ENCODE measurements at regions of chr4 and their contacts with region 1.

Region 1: DNA sequence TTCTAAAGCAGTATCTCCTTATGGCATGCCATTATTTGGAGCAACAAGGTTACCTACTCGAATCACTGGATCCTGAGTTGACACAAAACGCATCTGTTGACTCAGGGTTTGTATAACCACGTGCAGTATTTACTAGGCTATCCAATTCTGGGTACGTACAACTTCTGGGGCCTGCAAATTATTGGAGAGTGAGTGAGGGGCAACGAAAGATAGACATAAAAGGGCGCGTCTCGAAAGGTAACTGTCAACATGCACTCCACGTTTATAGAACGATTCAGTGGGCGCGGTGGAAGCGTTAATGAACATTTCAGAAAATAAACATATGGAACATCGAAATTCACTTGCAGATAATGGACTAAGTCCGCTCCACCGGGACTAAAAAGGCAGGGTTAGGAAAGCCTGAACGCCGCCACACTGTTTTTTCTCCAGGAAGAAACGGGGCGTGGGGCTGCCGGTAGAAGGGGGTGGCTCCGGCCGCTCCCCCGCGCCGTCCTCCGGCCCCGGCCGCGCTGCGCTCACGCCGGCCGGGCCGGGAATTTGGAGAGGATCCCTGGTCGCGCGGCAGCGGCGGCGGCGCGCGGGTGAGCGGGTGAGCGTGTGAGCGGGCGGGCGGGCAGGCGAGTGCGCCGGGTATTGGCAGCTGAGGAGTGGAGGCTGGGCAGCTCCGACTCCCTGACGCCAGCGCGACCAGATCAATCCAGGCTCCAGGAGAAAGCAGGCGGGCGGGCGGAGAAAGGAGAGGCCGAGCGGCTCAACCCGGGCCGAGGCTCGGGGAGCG is at the start of gene SMAD1:
- DNase-seq: peak; percentile 84 to 87
- ATAC-seq: peak; percentile 80 to 85
- H3K4me3 ChIP-seq: peak within 1 kb of the TSS; percentile 68 to 94 (median 77)
- H3K27ac ChIP-seq: peak within 1 kb of the TSS; percentile 91 to 98 (median 94)
- H3K4me1 ChIP-seq: peaks cover 28 to 30% of the 10 kb centered on the region in 2 donors
- H3K27me3 ChIP-seq: no peaks in the 10 kb centered on the region
- CTCF ChIP-seq: peak in 1 of 5 experiments; percentile 5
- POLR2A ChIP-seq: peak; percentile 77 to 84
- total RNA-seq, gene SMAD1: 19.9 to 33.9 (median 21.7) TPM

Region 2: DNA sequence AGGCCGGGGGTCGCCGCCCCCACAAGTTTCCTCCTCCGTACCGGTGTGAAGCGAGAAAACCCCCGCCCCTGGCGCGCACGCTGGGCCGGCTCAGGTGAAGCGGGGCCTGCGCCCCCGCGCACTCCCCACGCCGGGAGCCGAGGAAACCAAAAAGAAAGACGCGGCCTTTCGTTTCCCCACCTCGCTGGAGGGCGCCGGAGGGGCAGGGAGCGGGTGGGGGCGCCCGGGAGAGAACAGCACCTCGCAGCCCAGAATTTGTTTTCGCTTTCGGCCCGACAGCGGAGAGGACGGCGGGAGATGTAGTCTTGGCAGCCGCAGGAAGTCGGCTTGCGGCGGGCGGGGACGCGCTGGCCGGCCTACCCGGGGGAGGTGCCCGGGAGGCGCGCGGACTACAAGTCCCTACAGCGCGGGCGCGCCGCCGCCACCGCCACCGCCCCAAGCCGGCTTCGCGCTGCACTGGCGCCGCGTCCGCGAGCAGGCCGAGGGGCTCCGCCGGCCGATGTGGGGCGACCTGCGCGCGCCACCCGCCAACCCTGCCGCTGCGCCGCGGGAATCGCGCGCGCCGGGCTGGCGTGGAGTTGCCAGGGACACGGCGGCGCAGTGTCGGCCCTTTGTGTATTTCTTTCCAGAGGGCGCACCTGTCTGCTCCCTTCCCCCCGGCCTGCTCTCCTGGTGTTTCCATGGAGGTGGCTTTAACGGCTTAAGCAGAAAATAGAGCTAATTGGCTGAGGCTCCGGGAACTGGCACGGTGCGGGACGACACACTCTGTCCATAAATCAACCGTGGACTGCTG is 300.9 kb before region 1 on chr4 and contains the start of gene OTUD4:
- in situ Hi-C with region 1: no loop called
- intact Hi-C with region 1: loop called (anchors 1 kb)
- DNase-seq: peak; percentile 94 to 96
- ATAC-seq: peak; percentile 71 to 76
- H3K4me3 ChIP-seq: peak within 1 kb of the TSS; percentile 63 to 95 (median 87)
- H3K27ac ChIP-seq: peak within 1 kb of the TSS; percentile 97 to 99 (median 98)
- H3K4me1 ChIP-seq: peaks cover 26 to 43% of the 10 kb centered on the region in 2 donors
- H3K27me3 ChIP-seq: no peaks in the 10 kb centered on the region
- CTCF ChIP-seq: peak in 3 of 5 experiments; percentile 15 to 23 (median 18)
- POLR2A ChIP-seq: peak; percentile 86 to 87
- total RNA-seq, gene OTUD4: 32.6 to 61.1 (median 47.9) TPM

Region 3: GRCh38 chr4:145446184-145446583 is 35.2 kb before region 1 on chr4:
- in situ Hi-C with region 1: no loop called
- intact Hi-C with region 1: no loop called
- DNase-seq: no peak
- ATAC-seq: no peak
- H3K4me3 ChIP-seq: no peak overlapping the region
- H3K27ac ChIP-seq: no peak overlapping the region
- H3K4me1 ChIP-seq: no peaks in the 10 kb centered on the region
- H3K27me3 ChIP-seq: no peaks in the 10 kb centered on the region
- CTCF ChIP-seq: no peak
- POLR2A ChIP-seq: no peak

Region 4: DNA sequence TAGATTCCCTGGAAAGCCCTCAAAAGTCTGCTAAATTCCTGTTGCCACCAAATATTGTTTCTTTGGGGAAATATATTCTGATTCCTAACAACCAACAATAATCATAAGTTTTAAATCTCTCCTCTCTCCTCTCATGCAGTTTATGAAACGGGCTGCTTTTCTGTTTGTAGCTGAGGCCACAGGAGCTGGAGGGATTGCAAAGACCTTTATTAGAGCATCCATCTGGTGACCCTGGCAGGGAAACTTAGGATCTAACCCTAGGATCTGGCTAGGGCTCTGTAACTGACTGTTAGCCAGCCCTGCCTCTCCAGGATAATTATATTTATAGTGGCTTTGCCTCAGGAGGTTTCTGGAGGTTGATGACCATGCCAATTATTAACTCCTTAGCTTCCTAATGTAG is 57.2 kb after region 1 on chr4:
- in situ Hi-C with region 1: no loop called
- intact Hi-C with region 1: loop called (anchors 5 kb)
- DNase-seq: no peak
- ATAC-seq: no peak
- H3K4me3 ChIP-seq: no peak overlapping the region
- H3K27ac ChIP-seq: no peak overlapping the region
- H3K4me1 ChIP-seq: peaks cover 23 to 45% of the 10 kb centered on the region in 2 donors
- H3K27me3 ChIP-seq: no peaks in the 10 kb centered on the region
- CTCF ChIP-seq: no peak
- POLR2A ChIP-seq: no peak

Region 5: GRCh38 chr4:145557720-145558119 is 76.4 kb after region 1 on chr4:
- in situ Hi-C with region 1: no loop called
- intact Hi-C with region 1: loop called (anchors 2 kb)
- DNase-seq: peak in 1 of 2 donors; percentile 52
- ATAC-seq: peak; percentile 42 to 81
- H3K4me3 ChIP-seq: no peak overlapping the region
- H3K27ac ChIP-seq: no peak overlapping the region
- H3K4me1 ChIP-seq: no peaks in the 10 kb centered on the region
- H3K27me3 ChIP-seq: no peaks in the 10 kb centered on the region
- CTCF ChIP-seq: peak; percentile 76 to 88 (median 77)
- POLR2A ChIP-seq: no peak

Region 6: DNA sequence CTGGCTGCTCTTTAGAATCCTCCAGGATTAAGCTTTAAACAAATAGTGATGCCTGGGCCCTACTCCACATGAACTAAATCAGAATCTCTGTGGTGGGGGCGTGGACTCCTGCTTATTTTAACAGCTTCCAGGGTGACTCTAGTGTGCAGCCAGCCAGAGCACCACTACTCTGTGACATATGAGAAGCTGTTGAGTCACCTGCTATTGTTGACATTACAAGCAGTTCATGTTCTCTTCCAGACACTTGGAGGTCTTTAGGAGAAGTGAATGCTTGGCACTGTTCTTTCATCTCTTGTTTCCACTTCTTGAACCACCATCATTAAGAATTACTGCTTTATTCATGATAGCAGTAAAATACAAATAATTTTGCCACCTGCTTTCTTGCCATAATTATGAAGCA is 198.2 kb after region 1 on chr4:
- in situ Hi-C with region 1: no loop called
- intact Hi-C with region 1: loop called (anchors 5 kb)
- DNase-seq: peak; percentile 80
- ATAC-seq: peak; percentile 97 to 99
- H3K4me3 ChIP-seq: peak overlapping the region in 2 of 4 donors; percentile 31 to 32
- H3K27ac ChIP-seq: peak overlapping the region; percentile 79 to 91 (median 82)
- H3K4me1 ChIP-seq: peaks cover 25 to 36% of the 10 kb centered on the region in 2 donors
- H3K27me3 ChIP-seq: no peaks in the 10 kb centered on the region
- CTCF ChIP-seq: no peak
- POLR2A ChIP-seq: no peak

Region 7: DNA sequence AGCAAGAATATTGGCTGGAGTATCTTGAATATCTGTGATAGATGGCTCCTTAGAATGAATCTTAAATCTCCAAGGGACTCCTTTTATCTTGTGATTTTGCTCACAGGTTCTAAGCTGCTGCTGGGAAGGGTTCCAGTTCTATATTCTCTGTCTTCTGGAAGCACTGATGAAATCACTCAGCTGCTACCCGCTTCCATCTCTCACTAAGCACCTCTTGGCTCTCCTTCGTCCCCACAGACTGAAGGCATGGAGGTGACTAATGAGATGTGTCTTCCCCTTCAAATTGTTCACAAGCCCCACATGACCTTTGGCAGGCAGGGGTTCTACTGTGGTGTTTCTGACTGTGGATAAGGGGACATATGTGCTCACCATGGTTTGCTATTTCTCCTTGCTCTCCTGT is 274.4 kb after region 1 on chr4:
- in situ Hi-C with region 1: no loop called
- intact Hi-C with region 1: no loop called
- DNase-seq: no peak
- ATAC-seq: peak; percentile 72 to 74
- H3K4me3 ChIP-seq: no peak overlapping the region
- H3K27ac ChIP-seq: no peak overlapping the region
- H3K4me1 ChIP-seq: peaks cover 0 to 9% of the 10 kb centered on the region in 2 donors
- H3K27me3 ChIP-seq: no peaks in the 10 kb centered on the region
- CTCF ChIP-seq: no peak
- POLR2A ChIP-seq: no peak

Region 8: GRCh38 chr4:145819853-145820181 is 338.5 kb after region 1 on chr4:
- in situ Hi-C with region 1: no loop called
- intact Hi-C with region 1: loop called (anchors 10 kb)
- DNase-seq: peak; percentile 44 to 50
- ATAC-seq: peak; percentile 90 to 93
- H3K4me3 ChIP-seq: peak overlapping the region in 3 of 4 donors; percentile 12 to 34 (median 34)
- H3K27ac ChIP-seq: peak overlapping the region; percentile 77 to 87 (median 83)
- H3K4me1 ChIP-seq: peaks cover 30 to 32% of the 10 kb centered on the region in 2 donors
- H3K27me3 ChIP-seq: no peaks in the 10 kb centered on the region
- CTCF ChIP-seq: peak in 1 of 5 experiments; percentile 16
- POLR2A ChIP-seq: no peak

Region 9: DNA sequence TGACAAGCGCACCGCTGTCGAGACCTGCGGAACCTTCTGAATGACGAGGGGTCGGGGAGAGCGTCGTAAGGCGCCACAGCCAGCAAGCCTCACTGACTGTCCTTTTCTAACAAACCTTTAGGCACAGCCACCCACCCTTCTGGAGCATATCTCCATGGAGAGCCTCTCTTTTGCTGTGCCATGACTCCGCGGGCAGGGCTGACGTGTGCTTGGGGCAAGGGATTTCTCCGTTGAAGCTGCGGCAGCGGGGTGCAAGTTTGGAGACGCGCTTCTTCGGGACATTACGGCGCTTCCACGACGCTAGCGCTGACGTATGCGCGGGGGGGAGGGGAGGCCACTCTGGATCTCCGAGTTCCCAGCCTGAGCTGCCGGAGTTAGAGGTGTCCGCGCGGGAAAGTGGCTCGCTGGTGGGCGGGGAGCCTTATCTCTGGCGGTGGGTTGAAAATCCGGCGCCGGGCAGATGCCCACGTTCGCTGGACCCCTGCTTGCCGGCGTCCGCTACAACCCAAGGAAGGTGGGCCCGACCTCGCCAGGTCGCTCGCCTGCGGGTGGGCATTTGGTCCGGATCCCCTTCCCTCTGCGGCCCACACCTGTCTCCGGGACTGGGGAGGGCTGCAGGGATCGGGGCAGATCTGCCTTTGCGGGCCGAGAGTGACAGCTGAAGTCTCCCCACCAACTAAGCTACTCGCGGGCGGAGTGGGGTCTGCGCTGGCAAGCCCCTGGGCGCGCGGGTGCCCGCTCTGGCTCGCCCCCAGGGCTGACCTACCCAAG is 1040.9 kb after region 1 on chr4:
- in situ Hi-C with region 1: no loop called
- intact Hi-C with region 1: loop called (anchors 5 kb)
- DNase-seq: peak; percentile 78 to 84
- ATAC-seq: peak; percentile 92 to 93
- H3K4me3 ChIP-seq: peak overlapping the region; percentile 89 to 97 (median 92)
- H3K27ac ChIP-seq: peak overlapping the region; percentile 85 to 90 (median 87)
- H3K4me1 ChIP-seq: peaks cover 21 to 25% of the 10 kb centered on the region in 2 donors
- H3K27me3 ChIP-seq: no peaks in the 10 kb centered on the region
- CTCF ChIP-seq: no peak
- POLR2A ChIP-seq: peak; percentile 66 to 72